Activated naive CD4-positive, alpha-beta T cell treated with anti-CD3 and anti-CD28 coated beads for 36 hours (primary cell): ENCODE measurements at regions of chr9 and their contacts with region 1.

Region 1: GRCh38 chr9:93041108-93041802 is 17.2 kb upstream of the SUSD3 start:
- DNase-seq: peak; percentile 66
- H3K4me3 Mint-ChIP-seq: no peak overlapping the region
- H3K27ac Mint-ChIP-seq: peak overlapping the region; percentile 67
- H3K4me1 Mint-ChIP-seq: peaks cover 56% of the 10 kb centered on the region
- H3K27me3 Mint-ChIP-seq: no peaks in the 10 kb centered on the region

Region 2: GRCh38 chr9:93058355-93059096 is 17.3 kb after region 1 on chr9 and contains the start of gene SUSD3:
- CTCF ChIA-PET with region 1: interaction called, 3 read pairs
- intact Hi-C with region 1: loop called (anchors 2 kb)
- DNase-seq: peak; percentile 66
- H3K4me3 Mint-ChIP-seq: peak within 1 kb of the TSS; percentile 93
- H3K27ac Mint-ChIP-seq: peak within 1 kb of the TSS; percentile 99
- H3K4me1 Mint-ChIP-seq: peaks cover 55% of the 10 kb centered on the region
- H3K27me3 Mint-ChIP-seq: no peaks in the 10 kb centered on the region
- total RNA-seq, gene SUSD3: 62.7 to 68.3 TPM